ENCODE measurements at regions of chr1 and their contacts with region 1.

Region 1: GRCh38 chr1:145858894-145859490 is at the start of gene PIAS3:
- DNase-seq: peak; percentile 83 to 98
- H3K4me3 ChIP-seq: peak within 1 kb of the TSS; percentile 85 to 92
- H3K27ac ChIP-seq: peak within 1 kb of the TSS; percentile 92 to 93
- H3K4me1 ChIP-seq: peaks cover 6 to 13% of the 10 kb centered on the region in 2 donors
- H3K27me3 ChIP-seq: no peaks in the 10 kb centered on the region
- CTCF ChIP-seq: no peak
- total RNA-seq, gene PIAS3: 44.4 TPM

Region 2: GRCh38 chr1:145782166-145783099 is 76.6 kb before region 1 on chr1:
- intact Hi-C with region 1: no loop called
- DNase-seq: no peak
- H3K4me3 ChIP-seq: peak overlapping the region; percentile 41 to 62
- H3K27ac ChIP-seq: peak overlapping the region; percentile 80 to 87
- H3K4me1 ChIP-seq: peaks cover 0 to 15% of the 10 kb centered on the region in 2 donors
- H3K27me3 ChIP-seq: no peaks in the 10 kb centered on the region
- CTCF ChIP-seq: no peak

Region 3: GRCh38 chr1:145845514-145846161 is 13.4 kb before region 1 on chr1 and contains the start of gene NUDT17:
- intact Hi-C with region 1: loop called (anchors 1 kb)
- DNase-seq: peak; percentile 17 to 88
- H3K4me3 ChIP-seq: peak within 1 kb of the TSS; percentile 51 to 65
- H3K27ac ChIP-seq: peak within 1 kb of the TSS; percentile 73 to 78
- H3K4me1 ChIP-seq: peaks cover 0 to 21% of the 10 kb centered on the region in 2 donors
- H3K27me3 ChIP-seq: no peaks in the 10 kb centered on the region
- CTCF ChIP-seq: peak; percentile 88 to 98 (median 94)
- total RNA-seq, gene NUDT17: not detected

Region 4: DNA sequence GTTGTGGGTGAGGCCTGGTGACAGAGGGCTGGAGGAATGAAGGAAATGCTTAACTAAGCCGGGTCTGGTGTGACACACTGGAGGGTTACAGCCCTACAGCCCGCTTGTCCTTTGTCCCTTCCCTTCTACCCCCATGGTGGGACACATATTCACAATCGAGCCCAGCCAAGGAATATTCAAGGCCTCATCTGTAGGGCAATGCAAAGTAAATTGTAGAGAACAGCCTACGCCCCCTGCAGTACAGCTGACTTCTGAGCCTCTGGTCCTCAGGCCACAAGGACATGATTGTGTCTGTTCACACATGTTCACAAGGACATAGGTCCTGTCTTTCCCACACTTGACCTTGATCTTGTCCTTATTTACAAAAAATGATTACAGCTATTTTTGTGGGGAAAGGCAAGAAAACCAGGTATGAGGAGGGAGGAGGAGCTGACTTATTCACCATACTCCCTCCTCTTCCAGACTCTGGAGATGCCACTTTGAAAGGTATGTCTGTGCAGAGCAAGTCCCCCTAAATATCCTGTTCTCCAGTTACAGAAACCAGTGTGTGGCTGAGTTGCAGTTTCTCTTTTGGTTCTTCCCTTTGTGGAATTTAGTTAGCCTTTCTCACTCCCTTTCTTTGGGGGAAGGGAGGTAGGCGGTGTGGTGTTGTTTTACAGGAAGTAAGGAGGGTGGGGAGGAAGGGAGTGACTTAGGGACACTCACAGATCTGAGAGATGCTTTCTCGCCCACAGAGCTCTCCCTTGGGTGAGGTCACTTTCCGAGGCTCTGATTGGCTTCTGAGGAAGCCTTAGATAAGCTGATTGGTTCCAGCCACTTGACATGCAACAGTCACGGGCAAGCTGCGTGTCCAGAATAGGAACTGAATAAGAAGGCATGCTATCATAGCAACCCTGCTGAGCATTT is 120.1 kb after region 1 on chr1:
- intact Hi-C with region 1: no loop called
- DNase-seq: peak; percentile 94 to 99
- H3K4me3 ChIP-seq: peak overlapping the region; percentile 35 to 37
- H3K27ac ChIP-seq: peak overlapping the region; percentile 90 to 98
- H3K4me1 ChIP-seq: peaks cover 36 to 63% of the 10 kb centered on the region in 2 donors
- H3K27me3 ChIP-seq: no peaks in the 10 kb centered on the region
- CTCF ChIP-seq: peak in 1 of 3 experiments; percentile 23